ENCODE measurements at regions of chrX and their contacts with region 1.

Region 1: GRCh38 chrX:138711399-138712347 is at the start of gene FGF13:
- DNase-seq: peak in 1 of 2 donors; percentile 70
- H3K4me3 ChIP-seq: peak within 1 kb of the TSS; percentile 45 to 69
- H3K27ac ChIP-seq: peak within 1 kb of the TSS; percentile 68 to 73
- H3K4me1 ChIP-seq: no peaks in the 10 kb centered on the region
- H3K27me3 ChIP-seq: no peaks in the 10 kb centered on the region
- CTCF ChIP-seq: peak in 1 of 3 experiments; percentile 34
- total RNA-seq, gene FGF13: 12.7 TPM

Region 2: DNA sequence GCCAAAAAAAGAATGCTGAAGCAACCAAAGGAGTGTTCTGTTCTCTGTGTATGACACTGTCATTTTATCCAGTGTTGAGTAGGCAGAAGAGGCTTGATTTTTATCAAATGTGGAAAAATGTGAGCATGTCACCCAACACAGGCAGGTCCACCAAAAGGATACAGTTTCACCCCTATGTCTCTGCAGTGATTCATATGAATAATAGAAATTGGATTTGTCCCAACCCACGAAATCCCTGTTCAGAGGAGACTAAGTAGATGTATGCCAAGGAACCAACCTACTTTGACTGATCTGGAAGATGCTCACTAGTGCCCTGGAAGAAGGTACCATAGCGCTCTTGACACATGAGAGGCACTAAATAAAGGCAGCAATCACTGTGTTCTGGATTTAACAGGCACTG is 72.7 kb before region 1 on chrX:
- intact Hi-C with region 1: loop called (anchors 5 kb)
- DNase-seq: no peak
- H3K4me3 ChIP-seq: no peak overlapping the region
- H3K27ac ChIP-seq: no peak overlapping the region
- H3K4me1 ChIP-seq: no peaks in the 10 kb centered on the region
- H3K27me3 ChIP-seq: no peaks in the 10 kb centered on the region
- CTCF ChIP-seq: no peak

Region 3: DNA sequence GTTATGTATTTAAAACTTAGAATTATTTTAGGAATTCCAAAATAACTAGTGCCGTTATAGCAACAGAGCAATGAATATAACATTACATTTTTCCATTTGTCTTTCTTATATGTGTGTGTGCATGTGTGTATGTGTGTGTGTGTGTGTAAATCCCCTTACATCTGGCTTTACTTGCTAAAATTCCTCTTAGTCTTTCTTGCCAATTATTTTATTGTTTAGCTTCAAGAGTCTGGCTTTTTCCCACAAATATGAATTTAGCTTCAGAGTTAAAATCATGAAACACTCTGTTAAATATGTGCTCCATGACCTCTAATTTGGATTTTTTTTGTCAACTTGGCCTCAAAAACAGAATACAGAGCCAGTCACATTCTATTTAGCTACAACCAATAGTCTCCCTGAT is 19.1 kb before region 1 on chrX:
- intact Hi-C with region 1: no loop called
- DNase-seq: no peak
- H3K4me3 ChIP-seq: no peak overlapping the region
- H3K27ac ChIP-seq: no peak overlapping the region
- H3K4me1 ChIP-seq: no peaks in the 10 kb centered on the region
- H3K27me3 ChIP-seq: no peaks in the 10 kb centered on the region
- CTCF ChIP-seq: no peak